Heart right ventricle (tissue), 16 donors: ENCODE measurements at regions of chr19 and their contacts with region 1.

Region 1: GRCh38 chr19:12194827-12195731 is 32.2 kb downstream of the ZNF136 start:
- DNase-seq: peak; percentile 84 to 90
- ATAC-seq: peak; percentile 96 to 100 (median 99)
- H3K4me3 ChIP-seq: peak overlapping the region; percentile 56 to 87 (median 75)
- H3K27ac ChIP-seq: peak overlapping the region in 9 of 10 donors; percentile 24 to 82 (median 66)
- H3K4me1 ChIP-seq: peaks cover 0 to 12% (median 7%) of the 10 kb centered on the region in 9 donors
- H3K27me3 ChIP-seq: peaks cover 0 to 9% (median 0%) of the 10 kb centered on the region in 7 donors
- CTCF ChIP-seq: peak in 1 of 9 donors; percentile 8

Region 2: GRCh38 chr19:12162882-12163806 is 31.9 kb before region 1 on chr19 and contains the start of gene ZNF136:
- intact Hi-C with region 1: no loop called
- DNase-seq: peak; percentile 93 to 98
- ATAC-seq: peak; percentile 97 to 99 (median 99)
- H3K4me3 ChIP-seq: peak within 1 kb of the TSS; percentile 76 to 98 (median 87)
- H3K27ac ChIP-seq: peak within 1 kb of the TSS; percentile 88 to 98 (median 95)
- H3K4me1 ChIP-seq: peaks cover 6 to 43% (median 41%) of the 10 kb centered on the region in 9 donors
- H3K27me3 ChIP-seq: no peaks in the 10 kb centered on the region
- CTCF ChIP-seq: no peak
- total RNA-seq, gene ZNF136: 3.3 to 7.1 (median 4.6) TPM

Region 3: DNA sequence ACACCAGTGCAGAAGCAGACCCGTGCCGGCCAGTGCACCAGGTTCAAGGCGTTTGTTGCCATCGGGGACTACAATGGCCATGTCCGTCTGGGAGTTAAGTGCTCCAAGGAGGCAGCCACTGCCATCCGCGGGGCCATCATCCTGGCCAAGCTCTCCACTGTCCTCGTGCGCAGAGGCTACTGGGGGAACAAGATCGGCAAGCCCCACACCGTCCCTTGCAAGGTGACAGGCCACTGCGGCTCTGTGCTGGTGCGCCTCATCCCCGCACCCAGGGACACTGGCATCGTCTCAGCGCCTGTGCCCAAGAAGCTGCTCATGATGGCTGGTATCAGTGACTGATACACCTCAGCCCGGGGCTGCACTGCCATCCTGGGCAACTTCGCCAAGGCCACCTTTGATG is 89.6 kb after region 1 on chr19:
- intact Hi-C with region 1: loop called in 1 of 10 experiments (anchors 5 kb)
- DNase-seq: no peak
- ATAC-seq: no peak
- H3K4me3 ChIP-seq: no peak overlapping the region
- H3K27ac ChIP-seq: no peak overlapping the region
- H3K4me1 ChIP-seq: peaks cover 0 to 25% (median 15%) of the 10 kb centered on the region in 9 donors
- H3K27me3 ChIP-seq: no peaks in the 10 kb centered on the region
- CTCF ChIP-seq: no peak